ENCODE measurements at regions of chr18 and their contacts with region 1.

Region 1: DNA sequence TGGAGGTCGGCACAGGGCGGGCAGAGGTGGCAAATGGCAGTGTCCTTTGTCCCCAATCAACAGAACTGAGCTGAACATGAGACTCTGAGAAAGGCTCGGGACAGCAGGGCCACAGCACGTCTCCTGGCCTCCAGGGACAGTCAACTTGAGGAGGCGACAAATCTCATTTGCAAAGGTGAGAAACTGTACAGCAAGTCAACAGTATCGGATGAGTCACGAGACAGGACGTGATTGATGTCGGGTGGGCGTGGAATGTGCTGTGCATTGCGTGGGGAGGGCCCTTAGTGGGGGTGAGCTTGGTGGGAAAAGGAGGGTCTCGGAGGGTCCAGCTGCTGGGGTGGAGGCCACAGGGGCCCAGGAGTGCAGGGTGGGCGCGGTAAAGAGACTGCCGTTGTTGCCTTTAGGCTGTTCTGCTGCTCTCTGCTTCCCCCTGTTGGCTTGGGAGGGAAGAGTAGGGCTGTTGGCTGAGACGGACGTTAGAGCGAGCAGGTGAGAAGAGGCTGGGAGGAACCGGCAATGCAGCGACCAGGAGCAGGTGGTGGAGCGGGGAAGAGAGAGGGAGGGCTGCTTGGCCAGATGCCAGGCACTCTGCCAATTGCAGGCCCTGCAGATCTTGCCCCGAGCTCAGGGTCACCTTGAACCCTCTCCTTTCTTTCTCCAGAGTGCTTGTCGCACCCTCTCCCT is 164.3 kb downstream of the BCL2 start:
- DNase-seq: peak; percentile 64 to 89 (median 80)
- ATAC-seq: peak; percentile 85
- H3K4me3 ChIP-seq: peak overlapping the region; percentile 56
- H3K4me3 Mint-ChIP-seq: peak overlapping the region; percentile 78 to 99 (median 88)
- H3K27ac ChIP-seq: peak overlapping the region; percentile 90
- H3K27ac Mint-ChIP-seq: peak overlapping the region; percentile 77 to 99 (median 95)
- H3K4me1 ChIP-seq: peaks cover 89 to 92% of the 10 kb centered on the region in 2 donors
- H3K4me1 Mint-ChIP-seq: peaks cover 80 to 100% (median 100%) of the 10 kb centered on the region in 7 donors
- H3K27me3 ChIP-seq: no peaks in the 10 kb centered on the region
- H3K27me3 Mint-ChIP-seq: no peaks in the 10 kb centered on the region

Region 2: GRCh38 chr18:62576845-62577512 is 578.3 kb before region 1 on chr18:
- CTCF ChIA-PET with region 1: no interaction called
- POLR2A ChIA-PET with region 1: no interaction called
- intact Hi-C with region 1: no loop called
- DNase-seq: no peak
- ATAC-seq: no peak
- H3K4me3 ChIP-seq: no peak overlapping the region
- H3K4me3 Mint-ChIP-seq: no peak overlapping the region
- H3K27ac ChIP-seq: no peak overlapping the region
- H3K27ac Mint-ChIP-seq: peak overlapping the region in 3 of 9 donors; percentile 31 to 86 (median 64)
- H3K4me1 ChIP-seq: no peaks in the 10 kb centered on the region
- H3K4me1 Mint-ChIP-seq: peaks cover 0 to 30% (median 4%) of the 10 kb centered on the region in 7 donors
- H3K27me3 ChIP-seq: no peaks in the 10 kb centered on the region
- H3K27me3 Mint-ChIP-seq: no peaks in the 10 kb centered on the region

Region 3: GRCh38 chr18:63131106-63131958 is 24.0 kb before region 1 on chr18:
- CTCF ChIA-PET with region 1: interaction called, 18 read pairs
- POLR2A ChIA-PET with region 1: interaction called, 4 read pairs
- intact Hi-C with region 1: loop called (anchors 1 kb)
- DNase-seq: peak in 7 of 9 donors; percentile 51 to 71 (median 69)
- ATAC-seq: peak; percentile 80
- H3K4me3 ChIP-seq: no peak overlapping the region
- H3K4me3 Mint-ChIP-seq: peak overlapping the region in 9 of 10 donors; percentile 13 to 81 (median 45)
- H3K27ac ChIP-seq: peak overlapping the region; percentile 61
- H3K27ac Mint-ChIP-seq: peak overlapping the region in 8 of 9 donors; percentile 36 to 94 (median 83)
- H3K4me1 ChIP-seq: peaks cover 9 to 18% of the 10 kb centered on the region in 2 donors
- H3K4me1 Mint-ChIP-seq: peaks cover 28 to 58% (median 50%) of the 10 kb centered on the region in 7 donors
- H3K27me3 ChIP-seq: no peaks in the 10 kb centered on the region
- H3K27me3 Mint-ChIP-seq: no peaks in the 10 kb centered on the region

Region 4: DNA sequence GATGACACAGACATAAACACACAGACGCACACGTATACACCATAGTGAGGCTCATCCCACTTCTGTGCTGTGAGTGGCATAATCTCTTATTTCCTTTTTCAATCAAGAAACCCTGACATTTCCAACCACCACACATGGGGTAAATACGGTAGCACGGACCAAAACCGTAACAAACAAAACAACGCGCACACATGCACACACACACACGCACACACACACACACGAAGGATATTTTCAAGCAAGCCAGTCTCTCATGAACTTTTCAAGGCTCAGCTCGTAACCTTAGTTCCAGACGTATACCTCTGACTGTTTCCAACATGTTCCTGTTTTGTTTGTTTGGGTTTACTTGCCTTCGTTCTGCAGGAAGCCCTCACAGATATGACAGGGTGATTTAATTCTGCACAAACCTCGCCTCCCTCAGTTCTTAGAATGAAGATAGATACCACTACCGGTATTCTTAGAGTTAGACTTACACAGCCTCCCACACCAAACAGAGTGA is 44.5 kb after region 1 on chr18:
- CTCF ChIA-PET with region 1: interaction called, 6 read pairs
- POLR2A ChIA-PET with region 1: interaction called, 15 read pairs
- intact Hi-C with region 1: loop called (anchors 1 kb)
- DNase-seq: peak in 7 of 9 donors; percentile 57 to 82 (median 74)
- ATAC-seq: peak; percentile 84
- H3K4me3 ChIP-seq: peak overlapping the region; percentile 63
- H3K4me3 Mint-ChIP-seq: no peak overlapping the region
- H3K27ac ChIP-seq: peak overlapping the region; percentile 73
- H3K27ac Mint-ChIP-seq: no peak overlapping the region
- H3K4me1 ChIP-seq: peaks cover 37 to 71% of the 10 kb centered on the region in 2 donors
- H3K4me1 Mint-ChIP-seq: peaks cover 19 to 49% (median 33%) of the 10 kb centered on the region in 7 donors
- H3K27me3 ChIP-seq: no peaks in the 10 kb centered on the region
- H3K27me3 Mint-ChIP-seq: no peaks in the 10 kb centered on the region

Region 5: DNA sequence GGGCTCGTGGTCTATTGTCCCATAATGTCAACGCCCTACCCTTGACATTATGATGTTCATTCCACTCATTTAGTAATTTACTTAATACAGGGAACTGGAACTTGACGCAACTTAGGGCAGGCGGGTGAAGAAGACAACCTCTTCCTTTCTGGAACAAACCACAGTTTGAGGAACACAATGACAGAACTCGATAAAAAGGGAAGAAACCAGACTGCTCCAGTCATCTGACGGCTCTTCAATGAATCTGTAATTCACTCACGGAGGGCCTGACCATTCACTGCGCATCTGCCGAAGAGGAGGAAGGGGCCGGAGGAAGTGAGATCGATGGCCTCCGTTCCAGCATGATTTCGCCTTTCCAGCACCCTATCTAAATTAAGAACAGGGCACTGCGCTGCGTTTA is 81.1 kb after region 1 on chr18:
- CTCF ChIA-PET with region 1: no interaction called
- POLR2A ChIA-PET with region 1: interaction called, 3 read pairs
- intact Hi-C with region 1: loop called in 1 of 2 experiments (anchors 1 kb)
- DNase-seq: no peak
- ATAC-seq: peak; percentile 84
- H3K4me3 ChIP-seq: no peak overlapping the region
- H3K4me3 Mint-ChIP-seq: peak overlapping the region in 6 of 10 donors; percentile 9 to 62 (median 31)
- H3K27ac ChIP-seq: no peak overlapping the region
- H3K27ac Mint-ChIP-seq: peak overlapping the region; percentile 30 to 90 (median 72)
- H3K4me1 ChIP-seq: peaks cover 6 to 24% of the 10 kb centered on the region in 2 donors
- H3K4me1 Mint-ChIP-seq: peaks cover 49 to 83% (median 76%) of the 10 kb centered on the region in 7 donors
- H3K27me3 ChIP-seq: no peaks in the 10 kb centered on the region
- H3K27me3 Mint-ChIP-seq: no peaks in the 10 kb centered on the region

Region 6: GRCh38 chr18:63311118-63312018 is 156.1 kb after region 1 on chr18:
- CTCF ChIA-PET with region 1: interaction called, 3 read pairs
- POLR2A ChIA-PET with region 1: interaction called, 13 read pairs
- intact Hi-C with region 1: no loop called
- DNase-seq: no peak
- ATAC-seq: peak; percentile 30
- H3K4me3 ChIP-seq: no peak overlapping the region
- H3K4me3 Mint-ChIP-seq: peak overlapping the region in 8 of 10 donors; percentile 18 to 99 (median 45)
- H3K27ac ChIP-seq: peak overlapping the region; percentile 94
- H3K27ac Mint-ChIP-seq: peak overlapping the region in 7 of 9 donors; percentile 26 to 98 (median 90)
- H3K4me1 ChIP-seq: peaks cover 29 to 44% of the 10 kb centered on the region in 2 donors
- H3K4me1 Mint-ChIP-seq: peaks cover 59 to 94% (median 90%) of the 10 kb centered on the region in 7 donors
- H3K27me3 ChIP-seq: no peaks in the 10 kb centered on the region
- H3K27me3 Mint-ChIP-seq: no peaks in the 10 kb centered on the region

Region 7: GRCh38 chr18:63518178-63519012 is 363.1 kb after region 1 on chr18:
- CTCF ChIA-PET with region 1: no interaction called
- POLR2A ChIA-PET with region 1: no interaction called
- intact Hi-C with region 1: no loop called
- DNase-seq: peak in 8 of 9 donors; percentile 13 to 62 (median 52)
- ATAC-seq: peak; percentile 76
- H3K4me3 ChIP-seq: no peak overlapping the region
- H3K4me3 Mint-ChIP-seq: no peak overlapping the region
- H3K27ac ChIP-seq: no peak overlapping the region
- H3K27ac Mint-ChIP-seq: no peak overlapping the region
- H3K4me1 ChIP-seq: no peaks in the 10 kb centered on the region
- H3K4me1 Mint-ChIP-seq: peaks cover 0 to 7% (median 0%) of the 10 kb centered on the region in 7 donors
- H3K27me3 ChIP-seq: no peaks in the 10 kb centered on the region
- H3K27me3 Mint-ChIP-seq: peaks cover 14 to 37% (median 21%) of the 10 kb centered on the region in 5 donors

Measured in naive thymus-derived CD4-positive, alpha-beta T cell (primary cell).